CD4-positive, alpha-beta memory T cell (primary cell): ENCODE measurements at regions of chr7 and their contacts with region 1.

Region 1: DNA sequence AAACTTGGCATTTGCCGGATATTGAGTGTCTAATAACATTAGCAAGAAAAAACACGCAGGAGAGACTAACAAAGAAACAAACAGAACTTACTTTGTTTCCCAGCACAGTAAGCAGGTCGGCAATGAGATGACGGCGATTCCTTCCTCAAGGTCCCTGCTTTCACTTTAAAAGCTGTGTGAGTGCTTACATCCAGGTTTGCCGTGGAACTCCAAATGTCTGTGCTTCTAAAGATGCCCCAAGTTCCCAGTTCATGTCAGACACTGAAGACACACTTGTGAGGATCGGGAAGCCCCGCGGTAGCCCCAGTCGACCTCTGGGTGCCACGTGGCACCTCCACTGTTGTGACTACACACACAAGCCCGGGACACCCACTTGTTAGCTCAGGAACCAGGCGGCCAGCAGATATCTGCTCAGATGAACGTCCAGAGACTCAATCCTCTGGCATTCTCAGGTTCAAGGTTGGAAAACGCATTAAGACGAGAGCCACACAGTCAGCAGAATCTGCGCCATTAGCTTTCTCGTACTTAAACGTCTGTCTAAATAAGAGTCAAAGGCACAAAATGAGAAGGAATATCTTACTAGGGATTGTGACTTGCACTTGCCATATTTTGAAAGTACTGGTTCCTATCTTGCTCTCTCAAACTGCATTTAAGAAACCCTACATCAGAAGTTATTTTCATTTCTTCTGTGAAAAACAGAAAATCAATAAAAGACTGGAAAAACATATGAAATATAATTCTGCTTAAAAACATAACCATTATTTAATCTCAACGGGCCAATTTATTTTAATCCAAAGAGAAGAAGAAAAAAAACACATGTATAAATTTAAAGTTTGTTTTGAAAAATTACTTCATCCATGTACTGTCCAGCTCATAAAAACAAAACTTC is 207.6 kb upstream of the KLF14 start:
- DNase-seq: peak in 3 of 5 donors; percentile 44 to 73 (median 44)
- H3K4me3 ChIP-seq: peak overlapping the region; percentile 51 to 52
- H3K4me3 Mint-ChIP-seq: peak overlapping the region; percentile 89 to 97 (median 94)
- H3K27ac ChIP-seq: peak overlapping the region; percentile 77
- H3K27ac Mint-ChIP-seq: peak overlapping the region in 6 of 7 donors; percentile 93 to 99 (median 98)
- H3K4me1 ChIP-seq: peaks cover 97% of the 10 kb centered on the region
- H3K4me1 Mint-ChIP-seq: peaks cover 74 to 96% (median 86%) of the 10 kb centered on the region in 4 donors
- H3K27me3 ChIP-seq: no peaks in the 10 kb centered on the region
- H3K27me3 Mint-ChIP-seq: peaks cover 0 to 2% of the 10 kb centered on the region in 2 donors

Region 2: GRCh38 chr7:130912862-130913631 is 28.5 kb before region 1 on chr7:
- CTCF ChIA-PET with region 1: interaction called, 5 read pairs
- POLR2A ChIA-PET with region 1: interaction called, 3 read pairs
- intact Hi-C with region 1: loop called (anchors 1 kb)
- DNase-seq: peak; percentile 80 to 98 (median 85)
- H3K4me3 ChIP-seq: peak overlapping the region; percentile 77 to 86
- H3K4me3 Mint-ChIP-seq: peak overlapping the region; percentile 82 to 98 (median 92)
- H3K27ac ChIP-seq: peak overlapping the region; percentile 96
- H3K27ac Mint-ChIP-seq: peak overlapping the region in 6 of 7 donors; percentile 93 to 99 (median 98)
- H3K4me1 ChIP-seq: peaks cover 86% of the 10 kb centered on the region
- H3K4me1 Mint-ChIP-seq: peaks cover 78 to 97% (median 89%) of the 10 kb centered on the region in 4 donors
- H3K27me3 ChIP-seq: no peaks in the 10 kb centered on the region
- H3K27me3 Mint-ChIP-seq: no peaks in the 10 kb centered on the region

Region 3: DNA sequence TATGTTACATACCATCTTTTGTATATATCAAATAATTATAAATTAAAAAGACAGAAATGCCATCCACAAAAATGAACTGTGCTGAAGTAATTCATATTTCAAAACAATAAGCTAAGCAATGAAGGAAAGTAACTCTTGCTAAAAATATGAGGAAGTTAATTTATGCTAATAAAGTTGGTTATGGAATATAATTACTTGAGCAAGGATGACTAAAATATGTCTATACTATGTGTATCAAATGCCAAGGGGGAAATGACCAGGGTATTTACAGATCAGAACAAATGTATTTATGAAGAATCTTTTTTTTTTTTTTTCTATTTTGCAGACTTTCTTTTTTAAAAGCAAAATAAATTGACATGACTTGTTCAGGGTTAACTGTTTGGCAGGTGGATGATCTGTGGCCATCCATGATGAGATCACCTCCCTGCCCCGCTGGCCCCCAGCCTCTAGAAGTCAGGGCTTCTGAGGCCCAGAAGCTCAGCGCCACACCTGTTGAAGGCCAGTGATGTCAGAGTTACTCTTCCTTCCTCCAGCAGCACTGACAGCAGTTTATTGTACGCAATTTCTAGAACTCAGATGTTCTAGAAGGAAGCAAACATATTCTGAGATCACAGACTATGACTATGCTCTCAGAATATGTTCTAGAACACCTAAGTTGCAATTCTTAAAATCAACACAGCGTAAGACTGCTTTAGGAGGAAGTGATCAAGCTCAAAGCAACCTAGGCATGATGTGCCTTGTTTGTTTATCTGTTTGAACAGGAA is 11.5 kb before region 1 on chr7:
- CTCF ChIA-PET with region 1: interaction called, 8 read pairs
- POLR2A ChIA-PET with region 1: interaction called, 50 read pairs
- intact Hi-C with region 1: loop called (anchors 1 kb)
- DNase-seq: peak; percentile 53 to 83 (median 72)
- H3K4me3 ChIP-seq: no peak overlapping the region
- H3K4me3 Mint-ChIP-seq: peak overlapping the region in 7 of 8 donors; percentile 5 to 73 (median 66)
- H3K27ac ChIP-seq: peak overlapping the region; percentile 45
- H3K27ac Mint-ChIP-seq: peak overlapping the region in 6 of 7 donors; percentile 64 to 96 (median 92)
- H3K4me1 ChIP-seq: peaks cover 100% of the 10 kb centered on the region
- H3K4me1 Mint-ChIP-seq: peaks cover 69 to 99% (median 84%) of the 10 kb centered on the region in 4 donors
- H3K27me3 ChIP-seq: no peaks in the 10 kb centered on the region
- H3K27me3 Mint-ChIP-seq: no peaks in the 10 kb centered on the region